ENCODE measurements at regions of chr2 and their contacts with region 1.

Region 1: DNA sequence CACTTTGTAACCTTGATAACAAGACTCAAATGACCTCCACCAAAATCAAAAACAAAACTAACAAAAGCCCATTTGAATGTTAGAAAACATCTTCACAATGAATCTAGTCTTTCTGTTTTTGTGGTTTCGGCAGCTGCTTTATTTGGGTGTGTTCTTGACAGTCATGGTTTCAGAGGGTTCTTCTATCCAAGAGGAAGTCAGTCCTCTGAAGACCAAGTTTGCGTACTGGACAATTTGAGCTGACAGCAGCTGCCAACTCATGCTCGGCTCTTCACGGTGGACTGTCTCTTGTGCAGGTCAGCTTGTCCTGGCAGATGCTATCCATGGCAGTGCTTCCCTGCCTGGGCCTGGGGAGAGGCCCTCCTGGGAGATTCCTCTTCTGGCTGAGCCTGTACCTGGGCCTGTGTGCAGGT is 91.0 kb downstream of the TMEM17 start:
- DNase-seq: no peak
- H3K4me3 ChIP-seq: no peak overlapping the region
- H3K27me3 ChIP-seq: peaks cover 2% of the 10 kb centered on the region; the same call in 1 of the 2 replicates
- CTCF ChIP-seq: no peak

Region 2: GRCh38 chr2:61911510-61911909 is 503.5 kb before region 1 on chr2:
- CTCF ChIA-PET with region 1: interaction called, 18 read pairs
- POLR2A ChIA-PET with region 1: no interaction called
- DNase-seq: no peak
- H3K4me3 ChIP-seq: no peak overlapping the region
- H3K27me3 ChIP-seq: no peaks in the 10 kb centered on the region
- CTCF ChIP-seq: no peak

Region 3: DNA sequence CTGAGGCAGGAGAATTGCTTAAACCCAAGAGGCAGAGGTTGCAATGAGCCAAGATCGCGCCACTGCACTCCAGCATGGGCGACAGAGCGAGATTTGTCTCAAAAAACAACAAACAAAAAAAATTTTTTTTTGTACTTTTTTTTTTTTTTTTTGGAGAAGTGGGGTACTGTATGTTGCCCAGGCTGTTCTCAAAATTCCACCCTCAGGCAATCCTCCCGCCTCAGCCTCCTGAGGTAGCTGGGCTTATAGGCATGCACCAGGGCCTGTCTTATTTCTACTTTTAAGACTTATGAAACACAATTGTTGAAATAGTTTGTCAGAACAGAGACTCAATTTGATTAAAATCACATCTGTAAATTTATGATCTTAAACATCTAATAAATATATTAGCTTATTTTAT is 467.4 kb before region 1 on chr2:
- CTCF ChIA-PET with region 1: no interaction called
- POLR2A ChIA-PET with region 1: interaction called, 15 read pairs
- DNase-seq: no peak
- H3K4me3 ChIP-seq: no peak overlapping the region
- H3K27me3 ChIP-seq: no peaks in the 10 kb centered on the region
- CTCF ChIP-seq: no peak

Region 4: GRCh38 chr2:61993444-61994024 is 421.5 kb before region 1 on chr2:
- CTCF ChIA-PET with region 1: interaction called, 22 read pairs
- POLR2A ChIA-PET with region 1: interaction called, 3 read pairs
- DNase-seq: no peak
- H3K4me3 ChIP-seq: no peak overlapping the region
- H3K27me3 ChIP-seq: no peaks in the 10 kb centered on the region
- CTCF ChIP-seq: peak; percentile 75

Region 5: GRCh38 chr2:62705007-62705829 is 290.2 kb after region 1 on chr2 and contains the start of gene EHBP1:
- CTCF ChIA-PET with region 1: interaction called, 3 read pairs
- POLR2A ChIA-PET with region 1: interaction called, 17 read pairs
- DNase-seq: peak; percentile 99
- H3K4me3 ChIP-seq: peak within 1 kb of the TSS; percentile 71
- H3K27me3 ChIP-seq: no peaks in the 10 kb centered on the region
- CTCF ChIP-seq: no peak
- polyA plus RNA-seq, gene EHBP1: 43.8 and 61.5 TPM in 2 replicates